Left ventricle myocardium superior (tissue), 1 donor: ENCODE measurements at regions of chr11 and their contacts with region 1.

Region 1: DNA sequence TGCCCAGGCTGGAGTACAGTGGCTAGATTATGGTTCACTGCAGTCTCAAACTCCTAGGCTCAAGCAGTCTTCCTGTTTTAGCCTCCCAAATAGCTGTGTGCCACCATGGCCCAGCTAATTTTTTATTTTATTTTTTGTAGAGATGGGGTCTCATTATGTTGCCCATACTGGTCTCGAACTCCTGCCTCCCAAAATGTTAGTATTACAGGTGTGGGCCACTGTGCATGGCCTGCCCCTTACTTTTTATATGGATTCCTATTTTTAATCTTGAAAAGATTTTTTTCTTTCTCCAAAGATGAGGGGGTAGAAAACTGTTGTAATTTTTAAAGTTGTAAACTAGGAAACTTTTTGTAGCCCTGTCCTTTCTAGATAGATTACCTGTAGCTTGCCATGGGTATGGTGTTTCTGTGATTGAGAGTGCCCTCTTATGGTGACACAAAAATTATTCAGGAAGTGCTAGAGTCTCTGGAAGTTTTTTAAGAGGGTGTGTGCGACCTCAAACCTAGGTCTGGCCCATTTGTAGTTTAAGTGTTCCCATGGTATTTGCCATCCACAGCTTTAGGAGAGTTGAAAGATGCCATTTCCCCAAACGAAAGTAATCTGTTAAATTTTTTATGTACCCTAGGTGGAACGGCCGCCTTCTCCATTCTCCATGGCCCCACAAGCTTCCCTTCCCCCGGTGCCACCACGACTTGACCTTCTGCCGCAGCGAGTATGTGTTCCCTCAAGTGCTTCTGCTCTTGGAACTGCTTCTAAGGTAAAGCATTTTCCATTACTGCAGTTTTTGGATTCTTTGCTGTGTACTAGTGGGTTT is 32.4 kb downstream of the MCAM start:
- DNase-seq: no peak
- ATAC-seq: peak; percentile 67

Region 2: DNA sequence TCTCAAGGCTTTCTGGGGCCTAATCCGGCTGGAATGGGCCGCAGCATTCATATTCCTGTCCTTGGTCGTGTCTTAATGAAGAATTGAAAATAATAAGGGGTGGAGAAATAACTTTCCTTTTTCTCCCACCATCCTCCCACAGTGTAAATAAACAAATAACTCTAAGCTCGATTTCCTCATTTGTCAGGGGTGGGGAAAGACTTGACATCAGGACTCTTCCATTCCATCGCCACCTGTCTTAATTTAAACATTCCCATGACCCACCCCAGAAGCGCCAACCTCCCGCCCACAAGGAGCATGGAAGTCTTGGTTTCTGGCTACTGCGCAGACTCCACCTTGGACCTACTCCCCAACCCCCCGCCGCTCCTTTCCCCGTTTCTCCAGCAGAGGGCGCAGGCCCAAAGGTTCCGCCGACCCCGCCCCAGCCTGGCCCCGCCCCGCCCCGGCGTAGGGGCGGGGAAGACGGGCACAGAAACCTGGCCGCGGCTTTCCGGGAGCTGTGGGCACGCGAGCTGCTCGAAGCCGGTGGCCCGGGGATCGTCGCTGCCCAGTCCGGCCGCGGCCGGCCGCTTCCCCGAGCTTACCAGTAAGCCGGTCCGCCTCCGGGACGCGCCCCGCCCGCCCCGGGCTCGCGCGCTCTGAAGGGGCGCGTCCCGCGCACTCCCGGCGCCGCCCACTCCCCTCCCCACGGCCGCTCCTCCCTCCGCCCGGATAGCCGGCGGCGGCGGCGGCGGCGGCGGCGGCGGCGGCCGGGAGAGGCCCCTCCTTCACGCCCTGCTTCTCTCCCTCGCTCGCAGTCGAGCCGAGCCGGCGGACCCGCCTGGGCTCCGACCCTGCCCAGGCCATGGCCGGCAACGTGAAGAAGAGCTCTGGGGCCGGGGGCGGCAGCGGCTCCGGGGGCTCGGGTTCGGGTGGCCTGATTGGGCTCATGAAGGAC is 78.7 kb before region 1 on chr11 and contains the start of gene CBL:
- intact Hi-C with region 1: loop called (anchors 5 kb)
- DNase-seq: peak; percentile 96
- ATAC-seq: peak; percentile 97
- total RNA-seq, gene CBL: 7.1 TPM

Region 3: GRCh38 chr11:119990309-119991021 is 705.9 kb after region 1 on chr11:
- intact Hi-C with region 1: no loop called
- DNase-seq: peak; percentile 74
- ATAC-seq: peak; percentile 90